Mammary epithelial cell (primary cell): ENCODE measurements at regions of chr13 and their contacts with region 1.

Region 1: GRCh38 chr13:97124916-97125809 is 97.0 kb upstream of the MBNL2 start:
- DNase-seq: peak; percentile 90
- H3K4me3 ChIP-seq: no peak overlapping the region
- H3K27ac ChIP-seq: peak overlapping the region; percentile 79
- H3K4me1 ChIP-seq: peaks cover 58% of the 10 kb centered on the region
- H3K27me3 ChIP-seq: no peaks in the 10 kb centered on the region
- CTCF ChIP-seq: peak in 1 of 2 donors; percentile 9

Region 2: DNA sequence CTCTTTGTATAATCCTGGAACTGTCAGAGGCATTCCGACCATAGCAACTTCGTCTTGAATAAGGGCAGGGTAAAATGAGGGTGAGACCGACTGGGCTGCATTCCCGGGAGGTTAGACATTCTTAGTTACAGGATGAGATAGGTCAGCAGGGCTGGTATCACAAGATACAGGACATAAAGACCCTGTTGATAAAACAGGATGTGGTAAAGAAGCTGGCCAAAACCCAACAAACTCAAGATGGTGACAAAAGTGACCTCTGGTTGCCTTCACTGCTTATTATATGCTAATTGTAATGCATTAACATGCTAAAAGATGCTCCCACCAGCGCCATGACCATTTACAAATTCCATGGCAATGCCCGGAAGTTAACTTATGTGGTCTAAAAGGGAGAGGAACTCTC is 69.3 kb after region 1 on chr13:
- CTCF ChIA-PET with region 1: no interaction called
- dilution Hi-C with region 1: no loop called
- in situ Hi-C with region 1: no loop called
- intact Hi-C with region 1: loop called (anchors 5 kb)
- DNase-seq: peak; percentile 74
- H3K4me3 ChIP-seq: no peak overlapping the region
- H3K27ac ChIP-seq: peak overlapping the region; percentile 71
- H3K4me1 ChIP-seq: peaks cover 19% of the 10 kb centered on the region
- H3K27me3 ChIP-seq: no peaks in the 10 kb centered on the region
- CTCF ChIP-seq: no peak

Region 3: GRCh38 chr13:97212601-97213040 is 87.5 kb after region 1 on chr13:
- CTCF ChIA-PET with region 1: interaction called, 5 read pairs
- dilution Hi-C with region 1: no loop called
- in situ Hi-C with region 1: loop called in 1 of 2 experiments (anchors 5 kb)
- intact Hi-C with region 1: no loop called
- DNase-seq: peak; percentile 67
- H3K4me3 ChIP-seq: no peak overlapping the region
- H3K27ac ChIP-seq: no peak overlapping the region
- H3K4me1 ChIP-seq: peaks cover 24% of the 10 kb centered on the region
- H3K27me3 ChIP-seq: no peaks in the 10 kb centered on the region
- CTCF ChIP-seq: peak; percentile 70 to 85

Region 4: DNA sequence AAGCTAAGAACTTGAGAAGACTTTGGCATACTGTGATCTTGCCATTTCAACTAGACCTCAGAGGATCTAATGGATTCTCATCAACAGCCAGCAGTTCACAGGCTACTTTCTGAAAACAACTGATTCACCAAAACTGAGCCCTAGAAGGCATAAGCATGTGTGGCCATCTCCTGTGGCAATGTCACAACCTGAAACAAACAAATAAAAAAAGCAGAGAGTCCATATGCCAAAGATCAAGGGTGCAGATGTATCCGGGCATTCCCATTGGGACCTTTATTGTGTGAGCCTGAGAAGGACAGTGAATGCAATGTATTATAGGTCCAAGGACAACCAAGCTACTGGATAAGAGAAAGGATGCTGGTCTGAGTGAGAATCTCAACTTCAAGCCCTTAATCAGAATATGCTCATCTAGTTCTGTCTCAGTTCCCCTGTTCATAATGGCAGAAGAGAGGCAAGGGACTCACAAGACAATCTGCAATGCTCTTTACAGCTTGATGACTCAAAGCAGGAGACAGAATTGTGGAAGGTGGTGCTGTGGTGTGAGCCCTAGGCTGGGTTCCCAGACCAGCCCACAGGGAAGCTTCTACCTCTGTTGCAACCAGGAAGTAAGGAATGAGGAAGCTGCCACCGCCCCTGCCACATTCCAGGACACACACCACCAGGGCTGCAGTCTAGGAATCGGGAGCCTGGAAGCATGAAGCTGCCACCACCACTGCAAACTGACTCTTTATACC is 442.5 kb after region 1 on chr13:
- CTCF ChIA-PET with region 1: interaction called, 15 read pairs
- dilution Hi-C with region 1: no loop called
- in situ Hi-C with region 1: no loop called
- intact Hi-C with region 1: no loop called
- DNase-seq: peak; percentile 61
- H3K4me3 ChIP-seq: no peak overlapping the region
- H3K27ac ChIP-seq: no peak overlapping the region
- H3K4me1 ChIP-seq: peaks cover 12% of the 10 kb centered on the region
- H3K27me3 ChIP-seq: no peaks in the 10 kb centered on the region
- CTCF ChIP-seq: no peak